ENCODE measurements at regions of chr19 and their contacts with region 1.

Region 1: DNA sequence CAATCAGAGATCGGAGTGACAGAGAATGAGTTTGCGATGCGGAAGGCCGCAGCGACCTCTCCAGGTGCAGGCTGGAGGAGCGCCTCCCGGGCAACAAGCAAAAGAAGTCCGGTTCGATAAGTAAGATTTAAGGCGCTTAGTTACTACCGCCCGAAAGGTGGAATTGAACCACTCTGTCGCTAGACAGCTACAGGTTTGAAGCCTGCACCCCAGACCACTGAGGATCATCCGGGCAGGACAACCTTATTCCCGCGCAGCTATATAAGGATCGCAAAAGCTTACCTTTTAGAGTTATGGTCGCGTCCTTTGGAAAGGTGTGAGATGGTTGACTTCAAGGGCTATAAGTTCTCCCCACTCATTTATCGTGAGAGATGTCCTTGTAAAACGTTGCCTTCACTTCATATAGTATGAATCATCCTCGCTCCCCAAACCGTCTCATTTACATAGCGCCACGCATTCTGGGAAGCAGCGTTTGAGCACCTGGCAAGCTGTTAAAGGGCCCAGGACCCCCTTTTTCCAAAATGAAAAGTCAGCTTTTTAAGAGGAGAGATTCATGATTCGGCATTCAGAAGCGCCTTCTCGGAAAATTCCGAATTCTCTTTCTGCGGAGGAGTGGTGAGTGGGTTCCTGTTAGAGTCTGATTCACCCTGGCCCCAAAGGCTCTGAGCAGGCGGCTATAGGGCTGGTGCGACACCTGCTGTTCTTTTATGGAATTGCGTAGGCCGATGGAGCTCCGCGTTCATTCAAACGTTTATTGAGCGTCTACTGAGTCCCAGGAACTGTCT is 10.8 kb downstream of the FOSB start:
- DNase-seq: peak; percentile 90
- H3K4me3 ChIP-seq: peak overlapping the region; percentile 36
- H3K27ac ChIP-seq: peak overlapping the region; percentile 84
- H3K4me1 ChIP-seq: peaks cover 4% of the 10 kb centered on the region
- H3K27me3 ChIP-seq: no peaks in the 10 kb centered on the region
- CTCF ChIP-seq: peak; percentile 98

Region 2: DNA sequence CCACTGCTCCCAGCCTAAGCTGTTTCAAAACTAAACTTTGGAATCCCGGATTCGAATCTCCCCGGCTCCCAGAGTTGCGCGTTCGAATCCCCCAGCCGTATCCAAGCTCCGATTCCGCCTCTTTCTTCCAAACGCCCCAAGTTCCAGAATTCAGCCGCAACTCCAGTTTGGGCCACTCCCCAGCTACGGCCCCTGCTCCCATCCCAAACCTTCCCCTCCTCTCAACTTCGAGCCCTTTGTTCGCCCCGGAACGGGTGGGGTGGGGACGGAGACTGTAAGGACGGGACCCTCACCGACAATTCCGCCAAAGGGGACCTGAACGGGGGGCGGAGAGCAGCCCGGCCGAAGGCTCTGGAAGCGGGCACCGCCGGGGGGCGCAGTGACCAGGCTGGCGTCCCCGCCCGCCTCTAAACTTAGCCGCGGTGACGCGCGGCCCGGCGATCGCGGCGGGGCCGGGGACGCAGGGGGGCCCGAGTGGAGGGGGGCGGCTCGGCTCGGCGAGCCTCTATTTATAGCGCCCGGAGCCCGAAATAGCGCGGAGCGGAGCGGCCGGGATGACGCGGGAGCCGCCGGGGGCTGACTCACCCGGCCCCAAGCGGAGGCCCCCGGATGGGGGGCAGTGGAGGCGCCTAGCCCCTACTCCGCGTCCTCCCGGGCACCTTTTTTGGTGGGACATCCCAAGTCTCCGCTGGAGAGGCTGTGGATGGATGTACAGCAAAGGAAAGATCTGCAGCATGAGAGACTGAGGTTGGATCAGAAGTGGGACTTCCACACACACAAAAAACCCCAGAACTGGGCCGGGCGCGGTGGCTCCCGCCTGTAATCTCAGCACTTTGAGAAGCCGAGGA is 50.0 kb before region 1 on chr19:
- intact Hi-C with region 1: loop called (anchors 2 kb)
- DNase-seq: no peak
- H3K4me3 ChIP-seq: peak overlapping the region; percentile 30
- H3K27ac ChIP-seq: no peak overlapping the region
- H3K4me1 ChIP-seq: no peaks in the 10 kb centered on the region
- H3K27me3 ChIP-seq: peaks cover 9% of the 10 kb centered on the region
- CTCF ChIP-seq: no peak

Region 3: DNA sequence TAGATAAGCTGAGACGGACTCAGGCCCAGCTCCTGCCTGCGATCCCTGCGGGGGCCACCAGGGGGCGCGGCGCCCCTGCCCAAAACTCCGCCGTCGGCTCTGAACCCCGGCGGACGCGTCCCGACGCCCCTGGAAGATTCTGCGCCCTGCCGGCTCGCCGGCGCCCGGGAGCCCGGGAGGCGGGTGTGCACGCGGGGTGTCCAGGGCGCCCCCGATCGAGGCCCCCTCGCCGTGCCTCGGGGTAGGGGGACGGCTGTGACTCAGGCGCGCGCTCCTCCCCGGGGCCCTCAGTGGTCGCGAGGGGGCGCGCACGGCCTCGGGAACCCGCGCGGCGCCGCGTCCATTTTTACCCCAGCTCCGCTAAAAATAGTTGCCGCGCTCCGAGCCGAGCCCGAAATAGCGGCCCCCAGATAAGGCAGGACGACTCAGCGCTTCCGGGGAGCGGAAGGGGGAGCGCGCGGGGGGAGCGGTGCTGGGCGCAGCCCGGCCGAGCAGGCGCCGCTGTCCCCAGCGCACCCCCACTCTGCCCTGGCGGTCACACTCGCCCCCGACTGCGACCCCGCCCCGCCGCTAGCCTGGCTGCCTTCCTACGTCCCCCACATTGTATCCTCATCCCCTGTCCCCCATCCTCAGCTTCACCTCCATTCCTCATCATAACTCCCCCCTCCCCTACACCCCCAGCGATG is 38.9 kb before region 1 on chr19:
- intact Hi-C with region 1: loop called (anchors 2 kb)
- DNase-seq: peak; percentile 80
- H3K4me3 ChIP-seq: peak overlapping the region; percentile 65
- H3K27ac ChIP-seq: peak overlapping the region; percentile 86
- H3K4me1 ChIP-seq: no peaks in the 10 kb centered on the region
- H3K27me3 ChIP-seq: no peaks in the 10 kb centered on the region
- CTCF ChIP-seq: peak; percentile 99